Activated naive CD8-positive, alpha-beta T cell treated with anti-CD3 and anti-CD28 coated beads, Interleukin-2, amount 10 ng/mL, durations not matched to agents 7 days and 5 days (primary cell): ENCODE measurements at regions of chr4 and their contacts with region 1.

Region 1: DNA sequence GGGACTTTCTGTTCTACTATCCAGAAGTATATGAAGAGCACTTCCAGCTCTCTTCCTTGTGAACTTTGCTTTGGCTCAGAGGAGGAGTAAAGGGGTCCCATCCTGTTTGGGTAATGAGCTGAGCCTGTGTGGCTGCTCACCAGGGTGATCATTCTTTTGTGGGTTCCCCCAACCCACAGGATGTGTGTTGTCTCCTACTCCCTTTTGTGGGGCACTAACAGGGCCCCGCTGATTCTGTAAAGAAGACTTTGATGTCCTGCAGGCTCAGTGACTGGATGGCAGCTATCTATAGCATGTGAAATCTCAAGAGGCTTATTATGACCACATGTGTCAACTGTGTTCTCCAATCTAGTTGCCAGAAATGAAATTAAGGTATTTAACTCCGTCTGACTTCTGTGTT is 40.8 kb downstream of the ZNF518B start:
- DNase-seq: peak; percentile 64
- ATAC-seq: peak; percentile 95
- H3K4me3 Mint-ChIP-seq: peak overlapping the region; percentile 62
- H3K27ac Mint-ChIP-seq: peak overlapping the region; percentile 31
- H3K4me1 Mint-ChIP-seq: peaks cover 38% of the 10 kb centered on the region
- H3K27me3 Mint-ChIP-seq: peaks cover 3% of the 10 kb centered on the region

Region 2: GRCh38 chr4:10461091-10461849 is 44.8 kb after region 1 on chr4:
- POLR2A ChIA-PET with region 1: interaction called, 13 read pairs
- DNase-seq: peak; percentile 94
- ATAC-seq: peak; percentile 81
- H3K4me3 Mint-ChIP-seq: peak overlapping the region; percentile 79
- H3K27ac Mint-ChIP-seq: no peak overlapping the region
- H3K4me1 Mint-ChIP-seq: peaks cover 17% of the 10 kb centered on the region
- H3K27me3 Mint-ChIP-seq: peaks cover 28% of the 10 kb centered on the region